A673 (cell line): ENCODE measurements at regions of chr12 and their contacts with region 1.

Region 1: GRCh38 chr12:24997970-24998582 is 49.2 kb upstream of the BCAT1 start:
- DNase-seq: peak; percentile 85
- H3K4me3 ChIP-seq: no peak overlapping the region
- H3K27ac ChIP-seq: no peak overlapping the region
- H3K4me1 ChIP-seq: peaks cover 22% of the 10 kb centered on the region
- H3K27me3 ChIP-seq: peaks cover 36% of the 10 kb centered on the region
- CTCF ChIP-seq: no peak

Region 2: DNA sequence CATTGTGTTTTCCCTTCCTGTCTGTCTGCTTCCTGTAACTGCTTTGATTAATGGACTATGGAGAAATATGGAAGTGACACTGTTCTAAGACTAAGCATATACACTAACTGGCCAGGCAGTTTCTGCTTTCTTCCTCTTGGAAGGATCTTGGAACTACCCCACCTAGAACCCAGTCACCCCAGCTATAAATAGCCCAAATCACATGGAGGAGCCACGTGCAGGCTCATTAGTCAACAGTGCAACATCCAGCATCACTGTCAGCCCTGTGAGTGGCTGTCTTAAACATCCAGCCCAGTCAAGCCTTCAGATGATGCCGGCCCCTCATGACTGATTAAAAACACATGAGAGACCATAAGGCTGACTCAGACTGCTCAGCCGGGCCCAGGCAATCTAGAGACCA is 88.4 kb before region 1 on chr12:
- CTCF ChIA-PET with region 1: no interaction called
- POLR2A ChIA-PET with region 1: no interaction called
- intact Hi-C with region 1: no loop called
- DNase-seq: no peak
- H3K4me3 ChIP-seq: no peak overlapping the region
- H3K27ac ChIP-seq: no peak overlapping the region
- H3K4me1 ChIP-seq: peaks cover 23% of the 10 kb centered on the region
- H3K27me3 ChIP-seq: no peaks in the 10 kb centered on the region
- CTCF ChIP-seq: no peak

Region 3: GRCh38 chr12:25052196-25052913 is 54.3 kb after region 1 on chr12:
- CTCF ChIA-PET with region 1: no interaction called
- POLR2A ChIA-PET with region 1: no interaction called
- intact Hi-C with region 1: loop called (anchors 2 kb)
- DNase-seq: no peak
- H3K4me3 ChIP-seq: no peak overlapping the region
- H3K27ac ChIP-seq: no peak overlapping the region
- H3K4me1 ChIP-seq: no peaks in the 10 kb centered on the region
- H3K27me3 ChIP-seq: no peaks in the 10 kb centered on the region
- CTCF ChIP-seq: no peak